G401 (cell line): ENCODE measurements at regions of chr1 and their contacts with region 1.

Region 1: DNA sequence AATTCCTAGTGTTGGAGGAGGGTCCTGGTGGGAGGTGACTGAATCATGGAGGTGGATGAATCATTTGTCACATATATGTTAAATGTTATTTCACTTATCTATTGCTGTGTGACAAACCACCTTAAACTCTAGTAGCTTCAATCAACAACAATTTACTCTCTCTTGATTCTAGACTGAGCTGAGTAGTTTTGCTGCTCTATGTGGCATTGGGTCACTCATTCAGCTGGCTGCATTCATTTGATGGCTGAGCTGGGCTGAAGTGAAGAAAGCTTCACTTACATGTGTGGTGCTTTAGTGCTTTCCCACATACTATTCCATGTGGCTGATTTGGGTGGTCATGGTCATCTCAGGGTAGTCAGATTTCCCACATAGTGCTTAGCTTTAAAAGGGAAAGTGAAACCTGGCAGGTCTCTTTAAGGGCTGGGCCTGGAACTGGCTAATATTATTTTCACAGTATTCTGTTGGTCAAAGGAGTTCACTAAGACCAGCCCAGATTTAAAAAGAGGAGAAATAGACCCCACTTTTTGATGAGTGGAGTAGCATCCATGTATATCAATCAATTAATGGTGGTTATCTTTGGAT is 10.5 kb downstream of the DNAH14 start:
- DNase-seq: no peak

Region 2: GRCh38 chr1:224774378-224774777 is 165.6 kb before region 1 on chr1:
- in situ Hi-C with region 1: no loop called
- DNase-seq: no peak

Region 3: DNA sequence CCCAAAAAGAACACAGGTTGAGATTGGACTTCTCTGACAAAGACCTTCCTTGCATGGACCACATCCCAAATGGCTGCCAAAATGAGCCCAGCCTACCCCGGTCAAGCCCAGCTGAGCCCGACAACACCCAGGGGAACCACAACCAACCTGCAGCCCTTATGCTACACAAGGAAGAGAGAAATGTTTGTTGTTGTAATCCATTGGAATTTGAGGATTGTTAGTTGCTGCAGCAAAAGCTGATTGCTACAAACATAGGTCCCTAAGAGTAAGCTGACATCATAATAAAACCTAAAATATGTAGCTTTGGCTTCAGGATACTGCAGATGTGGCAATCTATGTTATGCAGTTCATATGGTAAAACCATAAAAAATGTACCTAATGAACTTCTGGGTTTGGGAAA is 76.0 kb before region 1 on chr1:
- in situ Hi-C with region 1: no loop called
- DNase-seq: no peak

Region 4: GRCh38 chr1:225070972-225071371 is 131.0 kb after region 1 on chr1:
- in situ Hi-C with region 1: loop called (anchors 10 kb)
- DNase-seq: no peak

Region 5: GRCh38 chr1:225299624-225300023 is 359.7 kb after region 1 on chr1:
- in situ Hi-C with region 1: no loop called
- DNase-seq: no peak